ENCODE measurements at regions of chr4 and their contacts with region 1.

Region 1: GRCh38 chr4:153045111-153045982 is 109.2 kb downstream of the FHDC1 start:
- DNase-seq: no peak
- CTCF ChIP-seq: no peak

Region 2: DNA sequence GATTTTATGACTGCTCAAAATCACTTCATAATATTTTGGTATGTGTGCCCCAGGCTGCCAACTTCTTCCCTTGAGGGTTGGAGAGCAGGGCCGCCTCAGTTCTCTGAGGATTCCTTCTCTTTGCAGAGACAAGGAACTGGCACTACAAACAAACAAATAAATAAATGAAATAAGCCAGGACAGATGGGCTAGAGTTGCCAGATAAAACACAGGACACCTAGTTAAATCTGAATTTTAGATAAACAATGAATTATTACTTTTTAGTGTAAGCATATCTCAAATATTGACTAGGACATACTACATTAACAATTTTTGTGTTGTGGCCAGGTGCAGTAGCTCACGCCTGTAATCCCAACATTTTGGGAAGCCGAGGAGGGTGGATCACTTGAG is 13.3 kb after region 1 on chr4:
- CTCF ChIA-PET with region 1: interaction called, 18 read pairs
- POLR2A ChIA-PET with region 1: no interaction called
- DNase-seq: no peak
- CTCF ChIP-seq: no peak

Measured in GM10248 (cell line).